Panc1 (cell line): ENCODE measurements at regions of chr20 and their contacts with region 1.

Region 1: GRCh38 chr20:1660246-1660645 is 2.7 kb upstream of the SIRPG start:
- DNase-seq: no peak
- ATAC-seq: no peak
- H3K4me3 ChIP-seq: no peak overlapping the region
- H3K27ac ChIP-seq: no peak overlapping the region
- H3K4me1 ChIP-seq: no peaks in the 10 kb centered on the region
- H3K27me3 ChIP-seq: peaks cover 10% of the 10 kb centered on the region; the same call in 1 of the 2 replicates
- CTCF ChIP-seq: no peak

Region 2: DNA sequence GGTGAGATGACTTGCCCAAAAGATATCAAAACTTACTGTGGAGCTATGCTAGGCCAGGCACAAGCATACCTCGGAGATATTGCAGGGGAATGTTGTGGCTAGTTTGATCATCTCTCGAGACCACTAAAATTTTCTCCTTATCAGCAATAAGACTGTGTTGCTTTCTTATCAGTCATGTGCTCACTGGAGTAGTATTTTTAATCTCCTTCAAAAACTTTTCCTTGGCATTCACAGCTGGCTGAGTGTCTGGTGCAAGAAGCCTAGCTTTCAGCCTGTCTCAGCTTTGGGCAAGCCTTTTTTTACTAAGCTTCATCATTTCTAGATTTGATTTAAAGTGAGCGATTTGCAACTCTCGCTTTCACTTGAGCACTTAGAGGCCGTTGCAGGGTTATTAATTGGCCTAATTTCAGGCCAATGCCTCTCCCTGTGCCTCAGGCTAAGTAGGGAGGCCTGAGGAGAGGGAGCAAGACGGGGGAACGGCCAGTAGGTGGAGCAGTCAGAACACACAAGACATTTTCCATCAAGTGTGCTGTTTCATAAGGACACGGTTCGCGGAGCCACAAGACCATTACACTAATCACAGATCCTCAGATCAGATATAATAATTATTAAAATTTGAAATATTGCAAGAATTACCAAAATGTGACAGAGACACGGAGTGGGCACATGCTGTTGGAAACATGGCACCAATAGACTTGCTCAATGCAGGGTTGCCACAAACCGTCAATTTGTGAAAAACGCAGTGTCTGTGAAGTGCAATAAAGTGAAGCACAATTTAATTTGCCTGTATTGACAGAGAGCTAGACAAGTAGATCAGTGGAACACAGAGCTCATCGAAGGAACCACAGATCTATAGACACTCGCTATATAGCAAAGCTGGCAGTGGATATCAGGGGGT is 104.1 kb after region 1 on chr20:
- CTCF ChIA-PET with region 1: no interaction called
- POLR2A ChIA-PET with region 1: interaction called, 12 read pairs
- in situ Hi-C with region 1: no loop called
- intact Hi-C with region 1: no loop called
- DNase-seq: peak; percentile 77
- ATAC-seq: peak; percentile 98
- H3K4me3 ChIP-seq: no peak overlapping the region
- H3K27ac ChIP-seq: no peak overlapping the region
- H3K4me1 ChIP-seq: peaks cover 3% of the 10 kb centered on the region; the same call in 1 of the 2 replicates
- H3K27me3 ChIP-seq: peaks cover 26% of the 10 kb centered on the region
- CTCF ChIP-seq: peak; percentile 94